Activated T-helper 1 cell treated with anti-CD3 and anti-CD28 coated beads, Interleukin-12 subunit alpha, Interleukin-12 subunit beta, Interleukin-2, Interleukin-4 antibody, amounts not matched to agents 30 ng/mL and 10 ng/mL and 1 ng/mL, durations not matched to agents 14 hours and 24 hours and 36 hours (primary cell): ENCODE measurements at regions of chr10 and their contacts with region 1.

Region 1: DNA sequence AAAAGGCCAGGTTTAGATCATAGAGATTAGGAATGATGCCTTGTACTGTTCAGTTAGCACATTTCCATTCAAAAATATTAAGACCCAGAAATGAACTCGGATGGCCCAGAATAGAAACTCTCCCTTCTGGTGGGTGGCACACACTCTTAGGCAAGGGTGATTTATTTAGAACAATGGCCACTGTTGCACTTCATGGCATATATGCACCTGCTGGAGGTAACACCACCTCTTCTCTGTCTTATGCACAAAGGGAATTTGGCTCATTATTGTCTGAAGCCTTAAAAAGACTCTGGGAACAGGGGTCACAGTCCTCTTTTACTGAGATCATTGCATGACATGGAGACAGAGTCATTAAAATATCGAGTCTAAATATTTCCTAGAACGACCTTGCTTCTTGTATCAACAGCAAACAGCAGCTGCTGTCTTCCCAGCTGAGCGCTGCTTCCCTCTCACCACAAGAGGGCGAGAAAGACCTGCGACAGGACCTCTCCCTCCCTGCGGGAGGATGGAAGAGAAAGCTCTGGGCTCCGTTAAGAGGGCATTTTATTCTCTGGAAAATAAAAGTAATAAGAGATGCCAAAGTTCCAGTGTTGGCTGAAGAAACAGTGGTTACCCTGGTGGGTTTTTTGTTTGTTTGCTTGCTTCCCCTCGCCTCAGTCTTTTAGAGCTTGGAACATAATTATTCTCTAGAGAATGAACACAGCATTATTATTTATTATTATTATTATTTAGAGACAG is 13.6 kb upstream of the BAMBI start:
- DNase-seq: peak; percentile 44
- H3K4me3 Mint-ChIP-seq: no peak overlapping the region
- H3K27ac Mint-ChIP-seq: no peak overlapping the region
- H3K4me1 Mint-ChIP-seq: peaks cover 8% of the 10 kb centered on the region
- H3K27me3 Mint-ChIP-seq: peaks cover 39% of the 10 kb centered on the region

Region 2: DNA sequence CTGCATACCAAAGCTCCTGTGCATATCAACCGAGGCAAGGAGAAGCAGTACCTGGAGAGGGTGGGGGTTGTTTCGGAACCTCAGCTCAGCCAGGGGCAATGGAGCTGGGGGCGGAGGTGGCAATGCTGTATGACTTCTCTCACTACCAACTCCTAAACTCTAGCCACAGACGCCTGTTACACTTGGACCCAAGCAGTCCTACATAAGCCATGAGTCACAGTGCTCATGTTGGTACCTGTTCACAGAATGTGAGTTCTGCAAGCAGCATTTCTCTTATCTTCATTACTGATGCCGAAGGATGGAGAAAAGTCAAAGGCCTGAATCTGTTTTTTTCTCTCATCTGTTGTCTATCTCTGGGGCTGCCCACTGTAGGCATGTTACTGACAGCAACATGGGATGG is 1162.9 kb before region 1 on chr10:
- intact Hi-C with region 1: no loop called
- DNase-seq: no peak
- H3K4me3 Mint-ChIP-seq: no peak overlapping the region
- H3K27ac Mint-ChIP-seq: no peak overlapping the region
- H3K4me1 Mint-ChIP-seq: peaks cover 12% of the 10 kb centered on the region
- H3K27me3 Mint-ChIP-seq: peaks cover 8% of the 10 kb centered on the region

Region 3: GRCh38 chr10:28628184-28628893 is 35.4 kb before region 1 on chr10:
- intact Hi-C with region 1: loop called (anchors 1 kb)
- DNase-seq: peak; percentile 42
- H3K4me3 Mint-ChIP-seq: no peak overlapping the region
- H3K27ac Mint-ChIP-seq: no peak overlapping the region
- H3K4me1 Mint-ChIP-seq: peaks cover 5% of the 10 kb centered on the region
- H3K27me3 Mint-ChIP-seq: peaks cover 14% of the 10 kb centered on the region

Region 4: GRCh38 chr10:28879875-28880682 is 216.3 kb after region 1 on chr10:
- intact Hi-C with region 1: loop called (anchors 5 kb)
- DNase-seq: no peak
- H3K4me3 Mint-ChIP-seq: no peak overlapping the region
- H3K27ac Mint-ChIP-seq: no peak overlapping the region
- H3K4me1 Mint-ChIP-seq: no peaks in the 10 kb centered on the region
- H3K27me3 Mint-ChIP-seq: peaks cover 10% of the 10 kb centered on the region

Region 5: GRCh38 chr10:28991326-28992270 is 327.9 kb after region 1 on chr10:
- intact Hi-C with region 1: loop called (anchors 1 kb)
- DNase-seq: no peak
- H3K4me3 Mint-ChIP-seq: no peak overlapping the region
- H3K27ac Mint-ChIP-seq: no peak overlapping the region
- H3K4me1 Mint-ChIP-seq: no peaks in the 10 kb centered on the region
- H3K27me3 Mint-ChIP-seq: no peaks in the 10 kb centered on the region

Region 6: DNA sequence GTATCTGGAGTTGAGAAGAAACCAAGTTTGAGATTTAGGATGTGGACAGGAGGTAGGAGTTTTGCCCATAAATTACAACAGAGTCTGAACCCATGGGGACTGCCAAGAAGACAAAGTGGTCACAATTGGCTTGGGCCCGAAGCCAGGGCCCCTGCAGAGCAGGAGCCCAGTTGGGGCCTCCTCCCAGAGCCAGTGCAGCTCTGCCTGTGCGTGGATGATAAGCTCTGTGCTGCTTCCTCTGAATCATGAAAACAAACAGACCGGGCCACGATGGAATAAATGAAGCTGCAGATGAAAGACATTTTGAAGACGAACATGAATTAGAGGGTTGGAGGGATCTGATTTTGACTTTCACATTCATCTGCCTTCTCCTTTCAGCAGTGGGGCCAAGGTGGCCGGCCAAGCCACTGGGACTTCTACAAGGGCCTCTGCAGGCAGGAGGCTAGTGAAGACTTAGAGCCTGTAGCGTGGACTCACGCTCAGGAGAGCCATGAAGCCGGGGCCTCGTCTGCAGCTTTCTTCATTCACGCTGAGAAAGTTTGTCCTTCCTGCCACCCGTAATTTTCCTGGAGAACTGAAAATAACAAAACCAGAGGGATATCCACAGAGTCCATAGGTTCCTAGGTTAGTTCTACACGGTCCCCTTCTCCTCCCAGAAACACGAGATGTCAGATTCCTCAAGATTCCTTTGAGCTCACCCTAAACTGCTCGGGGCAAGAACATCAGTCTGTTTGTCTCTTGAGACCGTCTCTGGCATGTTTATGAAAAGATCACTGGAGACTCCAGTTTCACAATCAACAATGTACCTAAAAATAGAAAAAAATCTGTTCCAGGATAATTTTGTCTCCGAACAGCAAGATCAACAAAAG is 468.4 kb after region 1 on chr10:
- intact Hi-C with region 1: loop called (anchors 10 kb)
- DNase-seq: no peak
- H3K4me3 Mint-ChIP-seq: no peak overlapping the region
- H3K27ac Mint-ChIP-seq: no peak overlapping the region
- H3K4me1 Mint-ChIP-seq: no peaks in the 10 kb centered on the region
- H3K27me3 Mint-ChIP-seq: peaks cover 8% of the 10 kb centered on the region

Region 7: DNA sequence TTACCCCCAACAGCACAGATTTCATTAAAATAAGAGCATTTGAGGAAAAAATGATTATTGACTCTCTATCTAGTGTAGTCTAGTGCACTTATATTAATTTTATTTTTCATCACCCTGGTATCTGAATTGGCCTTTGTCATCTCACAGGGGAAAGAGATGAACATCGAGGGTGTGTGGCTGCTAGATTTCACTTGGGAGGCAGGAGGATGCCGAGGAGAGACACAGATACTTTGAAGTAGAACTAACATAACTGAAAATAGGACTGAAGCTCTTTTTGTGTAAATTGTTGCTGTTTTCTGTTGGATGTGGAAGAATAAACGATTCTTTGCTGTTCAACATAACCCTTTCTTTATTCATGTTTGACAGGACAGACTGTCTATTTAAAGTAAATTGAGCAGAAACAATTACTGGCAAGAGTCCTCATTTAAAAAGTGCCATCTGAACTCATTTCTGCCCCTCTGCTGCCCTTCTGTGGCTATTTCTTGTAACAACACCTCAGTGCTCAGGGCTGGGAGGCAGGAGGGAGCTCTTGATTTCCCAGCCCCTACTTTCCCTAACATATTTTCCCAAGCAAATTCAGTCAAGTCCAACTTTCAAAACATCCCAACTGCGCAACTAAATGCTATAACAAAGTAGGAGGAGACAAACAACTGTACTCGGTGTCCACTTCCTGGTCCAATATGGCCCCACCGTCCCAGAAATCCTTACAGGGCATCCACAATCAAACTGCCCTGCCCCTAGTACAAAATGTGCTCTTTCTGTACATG is 640.7 kb after region 1 on chr10:
- intact Hi-C with region 1: loop called (anchors 1 kb)
- DNase-seq: no peak
- H3K4me3 Mint-ChIP-seq: no peak overlapping the region
- H3K27ac Mint-ChIP-seq: no peak overlapping the region
- H3K4me1 Mint-ChIP-seq: no peaks in the 10 kb centered on the region
- H3K27me3 Mint-ChIP-seq: peaks cover 2% of the 10 kb centered on the region

Region 8: GRCh38 chr10:29392376-29393021 is 728.8 kb after region 1 on chr10:
- intact Hi-C with region 1: loop called (anchors 5 kb)
- DNase-seq: no peak
- H3K4me3 Mint-ChIP-seq: no peak overlapping the region
- H3K27ac Mint-ChIP-seq: no peak overlapping the region
- H3K4me1 Mint-ChIP-seq: no peaks in the 10 kb centered on the region
- H3K27me3 Mint-ChIP-seq: peaks cover 11% of the 10 kb centered on the region